ENCODE measurements at regions of chr17 and their contacts with region 1.

Region 1: DNA sequence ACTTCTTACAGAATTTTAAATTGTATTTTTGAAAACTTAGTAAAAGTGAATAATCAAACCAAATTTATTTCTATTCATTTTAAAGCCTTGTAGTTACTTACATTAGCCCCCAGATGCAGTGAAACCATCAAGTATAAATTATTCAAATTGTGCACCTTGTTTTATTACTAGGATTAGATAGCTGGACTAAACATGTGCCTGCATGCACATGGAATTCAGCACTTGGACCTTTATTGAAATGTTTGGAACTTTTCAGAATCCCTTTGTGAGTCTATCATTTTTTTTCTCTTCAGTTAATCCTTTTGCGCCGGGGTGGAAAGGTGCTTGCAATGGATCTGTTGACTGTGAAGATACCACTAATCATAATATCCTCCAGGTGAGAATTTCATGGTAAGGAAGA is 4.7 kb downstream of the ZPBP2 start:
- DNase-seq: no peak
- H3K4me3 ChIP-seq: no peak overlapping the region
- H3K27ac ChIP-seq: no peak overlapping the region
- H3K4me1 ChIP-seq: no peaks in the 10 kb centered on the region
- H3K27me3 ChIP-seq: no peaks in the 10 kb centered on the region
- CTCF ChIP-seq: peak in 2 of 6 experiments; percentile 54
- POLR2A ChIP-seq: no peak

Region 2: GRCh38 chr17:39800540-39800939 is 72.2 kb before region 1 on chr17:
- intact Hi-C with region 1: no loop called
- DNase-seq: peak; percentile 42 to 45
- H3K4me3 ChIP-seq: no peak overlapping the region
- H3K27ac ChIP-seq: peak overlapping the region in 1 of 3 donors; percentile 24
- H3K4me1 ChIP-seq: peaks cover 3 to 5% of the 10 kb centered on the region in 2 donors
- H3K27me3 ChIP-seq: no peaks in the 10 kb centered on the region
- CTCF ChIP-seq: no peak
- POLR2A ChIP-seq: no peak

Region 3: GRCh38 chr17:39979893-39980350 is 107.2 kb after region 1 on chr17:
- intact Hi-C with region 1: loop called (anchors 10 kb)
- DNase-seq: peak in 1 of 2 donors; percentile 6
- H3K4me3 ChIP-seq: peak overlapping the region; percentile 5 to 66 (median 65)
- H3K27ac ChIP-seq: peak overlapping the region in 2 of 3 donors; percentile 53 to 59
- H3K4me1 ChIP-seq: peaks cover 13 to 20% of the 10 kb centered on the region in 2 donors
- H3K27me3 ChIP-seq: no peaks in the 10 kb centered on the region
- CTCF ChIP-seq: no peak
- POLR2A ChIP-seq: no peak